Right lobe of liver (tissue), 6 donors: ENCODE measurements at regions of chr4 and their contacts with region 1.

Region 1: DNA sequence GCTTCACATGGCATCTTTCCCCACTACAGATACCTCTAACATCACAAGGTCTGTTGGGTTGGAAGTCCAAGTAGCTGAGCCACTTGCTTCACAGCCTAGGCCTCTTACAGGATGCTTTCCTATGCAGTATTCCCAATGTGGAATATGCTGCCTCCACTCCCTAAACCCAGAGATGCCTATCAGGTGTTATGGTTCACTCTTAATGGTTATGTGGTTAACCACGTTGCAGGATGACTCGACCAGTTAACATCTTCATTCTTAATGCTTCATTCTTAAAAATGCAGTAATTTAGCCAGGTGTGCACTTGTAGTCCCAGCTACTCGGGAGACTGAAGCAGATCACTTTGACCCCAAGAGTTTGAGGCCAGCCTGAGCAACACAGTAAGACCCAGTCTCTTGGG is 24.2 kb downstream of the HAUS3 start:
- DNase-seq: no peak
- ATAC-seq: no peak
- H3K4me3 ChIP-seq: no peak overlapping the region
- H3K27ac ChIP-seq: no peak overlapping the region
- H3K4me1 ChIP-seq: no peaks in the 10 kb centered on the region
- H3K27me3 ChIP-seq: no peaks in the 10 kb centered on the region
- CTCF ChIP-seq: no peak
- POLR2A ChIP-seq: no peak

Region 2: DNA sequence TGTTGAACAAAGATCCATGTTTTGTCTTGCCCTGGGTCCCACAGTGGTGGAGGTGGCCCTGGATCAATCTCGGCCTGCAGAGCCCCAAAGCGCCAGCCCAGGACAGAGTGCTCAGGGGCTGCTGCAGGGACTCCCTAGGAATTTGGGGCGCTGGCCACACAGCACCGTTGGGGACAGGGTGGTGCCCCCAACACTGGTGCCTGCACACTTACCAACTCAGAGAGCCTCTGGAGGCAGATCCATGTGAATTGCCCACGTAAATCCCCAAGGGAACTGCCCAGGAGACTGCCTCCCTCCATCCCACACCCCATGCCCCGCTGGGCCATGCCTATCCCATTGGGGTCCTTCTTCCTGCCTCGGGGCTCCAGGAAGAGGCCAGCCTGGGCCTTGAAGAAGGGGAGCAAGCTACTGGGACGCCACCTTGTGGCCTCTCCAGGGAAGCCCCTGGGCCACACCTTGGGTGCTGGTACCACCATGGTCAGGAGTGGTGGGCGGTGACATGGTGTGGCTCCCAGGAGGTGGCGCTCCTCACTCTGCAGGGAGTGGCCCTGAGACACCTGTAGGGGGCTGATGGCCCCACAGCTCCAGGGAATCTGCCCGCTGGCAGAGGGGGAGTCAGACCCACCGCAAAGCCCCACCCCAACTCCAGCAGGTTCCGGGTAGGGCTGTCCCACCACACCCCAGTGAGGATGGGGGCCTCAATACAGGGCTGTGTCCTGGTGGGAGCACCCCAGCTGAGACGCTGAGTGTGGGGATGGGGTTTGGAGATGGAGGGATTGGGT is 223.9 kb after region 1 on chr4:
- intact Hi-C with region 1: loop called in 1 of 2 experiments (anchors 10 kb)
- DNase-seq: peak in 1 of 3 donors; percentile 50
- ATAC-seq: peak; percentile 76 to 89 (median 83)
- H3K4me3 ChIP-seq: no peak overlapping the region
- H3K27ac ChIP-seq: no peak overlapping the region
- H3K4me1 ChIP-seq: no peaks in the 10 kb centered on the region
- H3K27me3 ChIP-seq: no peaks in the 10 kb centered on the region
- CTCF ChIP-seq: peak; percentile 60 to 75 (median 66)
- POLR2A ChIP-seq: no peak